Naive thymus-derived CD4-positive, alpha-beta T cell (primary cell): ENCODE measurements at regions of chr19 and their contacts with region 1.

Region 1: DNA sequence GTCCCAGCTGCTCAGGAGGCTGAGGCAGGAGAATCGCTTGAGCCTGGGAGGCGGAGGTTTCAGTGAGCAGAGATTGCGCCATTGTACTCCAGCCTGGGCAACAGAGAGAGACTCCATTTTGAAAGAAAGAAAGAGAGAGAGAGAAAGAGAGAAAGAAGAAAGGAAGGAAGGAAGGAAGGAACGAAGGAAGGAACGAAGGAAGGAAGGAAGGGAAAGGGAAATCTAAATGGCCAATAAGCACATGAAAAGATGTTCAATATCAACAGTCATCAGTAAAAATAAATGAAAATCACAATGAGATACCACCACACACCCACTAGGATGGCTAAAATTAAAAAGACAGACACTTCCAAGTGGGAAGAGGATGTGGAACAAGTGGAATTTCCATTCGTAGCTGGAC is 19.7 kb downstream of the FXYD5 start:
- DNase-seq: no peak
- ATAC-seq: no peak
- H3K4me3 ChIP-seq: no peak overlapping the region
- H3K4me3 Mint-ChIP-seq: no peak overlapping the region
- H3K27ac ChIP-seq: no peak overlapping the region
- H3K27ac Mint-ChIP-seq: peak overlapping the region in 5 of 9 donors; percentile 33 to 79 (median 66)
- H3K4me1 ChIP-seq: peaks cover 12 to 21% of the 10 kb centered on the region in 2 donors
- H3K4me1 Mint-ChIP-seq: peaks cover 28 to 57% (median 44%) of the 10 kb centered on the region in 7 donors
- H3K27me3 ChIP-seq: no peaks in the 10 kb centered on the region
- H3K27me3 Mint-ChIP-seq: no peaks in the 10 kb centered on the region

Region 2: GRCh38 chr19:35293363-35293739 is 119.1 kb after region 1 on chr19:
- CTCF ChIA-PET with region 1: no interaction called
- POLR2A ChIA-PET with region 1: no interaction called
- intact Hi-C with region 1: no loop called
- DNase-seq: no peak
- ATAC-seq: no peak
- H3K4me3 ChIP-seq: no peak overlapping the region
- H3K4me3 Mint-ChIP-seq: no peak overlapping the region
- H3K27ac ChIP-seq: no peak overlapping the region
- H3K27ac Mint-ChIP-seq: no peak overlapping the region
- H3K4me1 ChIP-seq: peaks cover 0 to 12% of the 10 kb centered on the region in 2 donors
- H3K4me1 Mint-ChIP-seq: peaks cover 0 to 11% (median 2%) of the 10 kb centered on the region in 7 donors
- H3K27me3 ChIP-seq: no peaks in the 10 kb centered on the region
- H3K27me3 Mint-ChIP-seq: peaks cover 0 to 3% (median 0%) of the 10 kb centered on the region in 5 donors

Region 3: GRCh38 chr19:35655600-35655999 is 481.4 kb after region 1 on chr19:
- CTCF ChIA-PET with region 1: no interaction called
- POLR2A ChIA-PET with region 1: interaction called, 12 read pairs
- intact Hi-C with region 1: no loop called
- DNase-seq: no peak
- ATAC-seq: no peak
- H3K4me3 ChIP-seq: no peak overlapping the region
- H3K4me3 Mint-ChIP-seq: peak overlapping the region in 1 of 10 donors; percentile 32
- H3K27ac ChIP-seq: no peak overlapping the region
- H3K27ac Mint-ChIP-seq: peak overlapping the region in 2 of 9 donors; percentile 28 to 72
- H3K4me1 ChIP-seq: peaks cover 0 to 4% of the 10 kb centered on the region in 2 donors
- H3K4me1 Mint-ChIP-seq: peaks cover 9 to 32% (median 16%) of the 10 kb centered on the region in 7 donors
- H3K27me3 ChIP-seq: no peaks in the 10 kb centered on the region
- H3K27me3 Mint-ChIP-seq: no peaks in the 10 kb centered on the region